OCI-LY7 (cell line): ENCODE measurements at regions of chr16 and their contacts with region 1.

Region 1: DNA sequence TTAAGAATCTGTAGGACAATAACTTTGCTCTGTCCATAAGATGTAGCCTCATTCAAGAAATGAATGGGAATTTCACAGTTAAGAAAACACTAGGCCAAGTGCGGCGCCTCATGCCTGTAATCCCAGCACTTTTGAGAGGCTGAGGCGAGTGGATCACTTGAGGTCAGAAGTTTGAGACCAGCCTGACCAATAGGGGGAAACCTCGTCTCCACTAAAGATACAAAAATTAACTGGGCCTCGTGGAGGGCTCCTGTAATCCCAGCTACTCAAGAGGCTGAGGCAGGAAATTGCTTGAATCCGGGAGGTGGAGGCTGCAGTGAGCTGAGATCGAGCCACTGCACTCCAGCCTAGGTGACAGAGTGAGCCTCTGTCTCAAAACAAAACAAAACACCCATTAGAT is 19.9 kb upstream of the RSL1D1 start:
- DNase-seq: no peak
- H3K4me3 ChIP-seq: no peak overlapping the region
- H3K27ac ChIP-seq: no peak overlapping the region
- H3K4me1 ChIP-seq: no peaks in the 10 kb centered on the region
- CTCF ChIP-seq: peak; percentile 65

Region 2: GRCh38 chr16:11658894-11659708 is 212.1 kb before region 1 on chr16:
- CTCF ChIA-PET with region 1: no interaction called
- POLR2A ChIA-PET with region 1: no interaction called
- intact Hi-C with region 1: no loop called
- DNase-seq: no peak
- H3K4me3 ChIP-seq: no peak overlapping the region
- H3K27ac ChIP-seq: no peak overlapping the region
- H3K4me1 ChIP-seq: peaks cover 24% of the 10 kb centered on the region
- CTCF ChIP-seq: no peak

Region 3: DNA sequence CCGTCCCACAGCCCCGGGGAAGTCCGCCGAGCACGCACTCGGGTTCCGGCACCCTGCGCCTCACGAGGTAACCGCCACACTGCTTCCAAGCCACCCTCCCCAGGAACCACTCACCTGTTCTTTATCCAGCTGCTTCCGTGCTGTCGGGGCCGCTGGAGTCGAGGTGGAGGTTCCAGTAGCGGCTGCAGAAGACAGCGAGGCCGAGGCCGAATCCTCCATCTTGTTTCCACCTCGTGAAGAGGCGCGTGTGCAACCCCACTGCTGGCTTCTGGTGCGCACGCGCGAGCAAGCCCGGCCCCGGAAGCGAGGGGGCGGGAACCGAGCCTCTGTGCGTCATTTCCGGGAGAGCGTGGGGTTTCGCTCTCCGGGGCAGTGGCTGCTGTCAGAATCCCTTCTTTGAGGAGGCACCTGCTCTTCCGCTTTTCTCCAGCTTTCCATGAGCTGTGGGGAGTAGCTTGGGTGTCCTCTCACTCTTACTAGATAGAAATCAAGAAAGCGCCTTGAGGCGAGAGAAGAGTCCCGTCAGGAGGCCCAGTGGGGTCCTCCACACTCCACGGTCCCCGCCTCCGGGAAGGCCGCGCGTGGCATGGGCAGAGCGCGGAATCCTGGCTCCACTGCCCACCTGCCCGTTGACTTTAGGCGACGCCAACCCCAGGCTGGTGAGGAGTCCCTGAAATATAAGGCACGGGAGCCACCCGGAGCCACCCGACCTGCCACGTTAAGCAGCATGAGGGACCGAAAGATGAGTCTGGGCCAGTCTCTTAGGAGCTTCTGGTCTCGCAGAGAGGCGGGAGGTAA is 19.7 kb before region 1 on chr16 and contains the start of gene RSL1D1:
- CTCF ChIA-PET with region 1: no interaction called
- POLR2A ChIA-PET with region 1: interaction called, 10 read pairs
- intact Hi-C with region 1: no loop called
- DNase-seq: peak; percentile 95
- H3K4me3 ChIP-seq: peak within 1 kb of the TSS; percentile 79
- H3K27ac ChIP-seq: peak within 1 kb of the TSS; percentile 57
- H3K4me1 ChIP-seq: peaks cover 39% of the 10 kb centered on the region
- CTCF ChIP-seq: no peak
- total RNA-seq, gene RSL1D1: 104 and 176 TPM in 2 replicates

Region 4: GRCh38 chr16:11896777-11897176 is 25.6 kb after region 1 on chr16:
- CTCF ChIA-PET with region 1: no interaction called
- POLR2A ChIA-PET with region 1: interaction called, 4 read pairs
- intact Hi-C with region 1: loop called (anchors 2 kb)
- DNase-seq: no peak
- H3K4me3 ChIP-seq: no peak overlapping the region
- H3K27ac ChIP-seq: no peak overlapping the region
- H3K4me1 ChIP-seq: peaks cover 3% of the 10 kb centered on the region
- CTCF ChIP-seq: no peak

Region 5: GRCh38 chr16:11915644-11916523 is 44.7 kb after region 1 on chr16 and contains the start of gene GSPT1:
- CTCF ChIA-PET with region 1: no interaction called
- POLR2A ChIA-PET with region 1: no interaction called
- intact Hi-C with region 1: no loop called
- DNase-seq: peak; percentile 99
- H3K4me3 ChIP-seq: peak within 1 kb of the TSS; percentile 84
- H3K27ac ChIP-seq: peak within 1 kb of the TSS; percentile 54
- H3K4me1 ChIP-seq: peaks cover 29% of the 10 kb centered on the region
- CTCF ChIP-seq: peak; percentile 48
- total RNA-seq, gene GSPT1: 54.3 and 67.2 TPM in 2 replicates